ENCODE measurements at regions of chr11 and their contacts with region 1.

Region 1: GRCh38 chr11:59680287-59681154 is 11.7 kb upstream of the PATL1 start:
- DNase-seq: peak in 4 of 10 donors; percentile 5 to 85 (median 19)

Region 2: GRCh38 chr11:59534676-59535075 is 145.8 kb before region 1 on chr11:
- intact Hi-C with region 1: loop called (anchors 5 kb)
- DNase-seq: no peak

Region 3: DNA sequence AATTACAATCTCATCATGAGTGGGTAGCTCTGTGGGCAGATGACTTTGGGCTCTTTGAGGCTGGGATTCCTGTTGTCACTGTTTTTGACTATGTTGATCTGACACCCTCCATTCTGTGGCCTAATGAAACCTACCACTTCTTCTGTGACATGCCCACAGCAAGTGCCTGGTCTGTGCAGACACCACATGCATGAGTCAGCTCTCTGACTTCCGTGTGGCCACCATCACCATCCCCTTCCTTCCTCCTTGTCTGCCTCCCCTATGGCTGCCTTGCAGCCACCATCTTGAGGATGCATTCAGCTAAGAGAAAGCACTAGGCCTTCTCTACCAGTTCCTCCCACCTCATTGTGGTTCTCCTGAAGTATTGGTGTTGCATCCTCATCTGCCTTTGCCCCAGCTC is 48.4 kb after region 1 on chr11:
- intact Hi-C with region 1: no loop called
- DNase-seq: no peak